CD4-positive, alpha-beta memory T cell (primary cell): ENCODE measurements at regions of chr12 and their contacts with region 1.

Region 1: DNA sequence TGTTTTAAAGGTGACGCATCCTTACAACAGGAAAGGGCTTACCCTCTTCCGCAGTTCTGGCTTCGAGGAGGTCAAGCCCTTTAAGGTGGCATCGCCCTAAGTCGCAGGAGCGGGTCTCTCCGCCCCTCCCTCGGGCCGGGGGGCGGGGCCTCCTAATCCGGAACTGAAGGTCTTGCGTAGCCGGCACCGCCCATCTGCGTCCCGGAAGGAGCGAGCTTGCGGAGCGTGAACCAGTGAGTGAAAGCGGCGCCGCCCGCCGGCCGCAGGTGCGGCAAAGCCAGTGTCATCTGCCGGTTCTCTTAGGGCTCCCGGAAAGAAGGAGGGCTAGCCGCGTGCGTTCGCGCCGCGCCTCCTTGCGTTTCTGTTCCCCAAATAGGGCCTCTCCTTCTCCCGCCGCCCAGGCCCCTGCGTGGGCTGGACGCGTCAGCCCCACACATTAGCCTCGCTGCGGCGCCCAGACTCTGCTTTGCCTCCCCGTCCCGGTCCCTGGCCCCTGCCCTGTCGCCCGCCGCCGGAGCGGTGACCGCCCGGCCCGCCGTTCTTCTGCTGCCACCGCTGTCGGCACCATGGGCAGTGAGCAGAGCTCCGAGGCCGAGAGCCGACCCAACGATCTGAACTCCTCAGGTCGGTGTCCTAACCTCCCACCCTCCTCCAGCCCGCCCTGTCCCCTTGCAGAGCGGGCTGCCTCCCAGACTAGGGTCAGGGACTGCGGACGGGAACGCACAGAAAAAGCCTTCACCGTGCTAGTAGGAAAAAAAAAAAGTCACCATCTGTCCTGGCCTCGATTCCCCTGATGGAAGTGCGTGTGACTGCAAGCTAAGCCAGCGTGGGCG is at the start of gene BORCS5:
- DNase-seq: peak; percentile 98 to 99 (median 99)
- H3K4me3 ChIP-seq: peak within 1 kb of the TSS; percentile 88 to 90
- H3K4me3 Mint-ChIP-seq: peak within 1 kb of the TSS; percentile 90 to 96 (median 95)
- H3K27ac ChIP-seq: peak within 1 kb of the TSS; percentile 99
- H3K27ac Mint-ChIP-seq: peak within 1 kb of the TSS; percentile 89 to 99 (median 98)
- H3K4me1 ChIP-seq: peaks cover 44% of the 10 kb centered on the region
- H3K4me1 Mint-ChIP-seq: peaks cover 29 to 76% (median 42%) of the 10 kb centered on the region in 4 donors
- H3K27me3 ChIP-seq: no peaks in the 10 kb centered on the region
- H3K27me3 Mint-ChIP-seq: no peaks in the 10 kb centered on the region
- total RNA-seq, gene BORCS5: 21.3 to 26.8 TPM

Region 2: GRCh38 chr12:11648831-11649702 is 708.0 kb before region 1 on chr12 and contains the start of gene ETV6:
- CTCF ChIA-PET with region 1: no interaction called
- POLR2A ChIA-PET with region 1: interaction called, 13 read pairs
- intact Hi-C with region 1: loop called (anchors 5 kb)
- DNase-seq: peak; percentile 79 to 84 (median 81)
- H3K4me3 ChIP-seq: peak within 1 kb of the TSS; percentile 59 to 97
- H3K4me3 Mint-ChIP-seq: peak within 1 kb of the TSS; percentile 95 to 99 (median 98)
- H3K27ac ChIP-seq: peak within 1 kb of the TSS; percentile 79
- H3K27ac Mint-ChIP-seq: peak within 1 kb of the TSS; percentile 85 to 99 (median 98)
- H3K4me1 ChIP-seq: peaks cover 32% of the 10 kb centered on the region
- H3K4me1 Mint-ChIP-seq: peaks cover 24 to 48% (median 27%) of the 10 kb centered on the region in 4 donors
- H3K27me3 ChIP-seq: no peaks in the 10 kb centered on the region
- H3K27me3 Mint-ChIP-seq: no peaks in the 10 kb centered on the region
- total RNA-seq, gene ETV6: 41.3 to 43.9 TPM

Region 3: GRCh38 chr12:12099102-12099501 is 258.0 kb before region 1 on chr12:
- CTCF ChIA-PET with region 1: no interaction called
- POLR2A ChIA-PET with region 1: no interaction called
- intact Hi-C with region 1: no loop called
- DNase-seq: no peak
- H3K4me3 ChIP-seq: no peak overlapping the region
- H3K4me3 Mint-ChIP-seq: no peak overlapping the region
- H3K27ac ChIP-seq: no peak overlapping the region
- H3K27ac Mint-ChIP-seq: peak overlapping the region in 1 of 7 donors; percentile 8
- H3K4me1 ChIP-seq: no peaks in the 10 kb centered on the region
- H3K4me1 Mint-ChIP-seq: no peaks in the 10 kb centered on the region
- H3K27me3 ChIP-seq: no peaks in the 10 kb centered on the region
- H3K27me3 Mint-ChIP-seq: no peaks in the 10 kb centered on the region

Region 4: DNA sequence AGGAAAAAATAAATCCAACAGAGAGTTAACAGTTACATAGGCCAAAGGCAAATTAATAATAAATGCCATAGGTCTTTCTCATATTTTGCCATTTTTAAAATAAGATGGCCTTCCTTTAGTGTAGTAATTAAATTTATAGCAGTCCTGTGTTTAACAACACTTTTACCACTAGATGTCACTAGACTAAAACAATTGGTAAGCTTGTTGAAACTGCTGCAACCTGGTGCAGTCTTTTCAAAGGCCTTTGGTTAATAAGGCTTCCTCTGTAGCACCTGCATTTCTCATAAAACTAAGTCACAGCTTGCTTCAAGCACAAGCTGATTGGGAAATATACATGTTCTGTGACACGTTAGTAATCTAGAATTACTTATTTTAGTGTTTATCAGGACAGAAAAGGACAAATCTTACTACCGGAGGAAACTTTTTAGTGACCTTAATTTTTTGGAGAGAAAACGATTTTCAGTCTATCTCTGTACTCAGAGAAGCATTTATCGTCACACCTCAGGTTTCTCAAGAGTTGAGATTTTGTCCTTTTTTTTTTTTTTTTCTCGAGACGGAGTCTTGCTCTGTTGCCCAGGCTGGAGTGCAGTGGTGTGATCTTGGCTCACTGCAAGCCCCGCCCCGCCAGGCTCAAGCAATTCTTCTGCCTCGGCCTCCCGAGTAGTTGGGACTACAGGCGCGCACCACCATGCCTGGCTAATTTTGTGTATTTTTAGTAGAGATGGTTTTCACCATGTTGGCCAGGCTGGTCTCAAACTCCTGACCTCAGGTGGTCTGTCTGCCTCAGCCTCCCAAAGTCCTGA is 19.7 kb after region 1 on chr12:
- CTCF ChIA-PET with region 1: interaction called, 15 read pairs
- POLR2A ChIA-PET with region 1: interaction called, 49 read pairs
- intact Hi-C with region 1: no loop called
- DNase-seq: peak; percentile 62 to 82 (median 81)
- H3K4me3 ChIP-seq: no peak overlapping the region
- H3K4me3 Mint-ChIP-seq: peak overlapping the region in 1 of 8 donors; percentile 41
- H3K27ac ChIP-seq: peak overlapping the region; percentile 23
- H3K27ac Mint-ChIP-seq: peak overlapping the region; percentile 52 to 99 (median 91)
- H3K4me1 ChIP-seq: peaks cover 50% of the 10 kb centered on the region
- H3K4me1 Mint-ChIP-seq: peaks cover 36 to 48% (median 43%) of the 10 kb centered on the region in 4 donors
- H3K27me3 ChIP-seq: no peaks in the 10 kb centered on the region
- H3K27me3 Mint-ChIP-seq: no peaks in the 10 kb centered on the region

Region 5: DNA sequence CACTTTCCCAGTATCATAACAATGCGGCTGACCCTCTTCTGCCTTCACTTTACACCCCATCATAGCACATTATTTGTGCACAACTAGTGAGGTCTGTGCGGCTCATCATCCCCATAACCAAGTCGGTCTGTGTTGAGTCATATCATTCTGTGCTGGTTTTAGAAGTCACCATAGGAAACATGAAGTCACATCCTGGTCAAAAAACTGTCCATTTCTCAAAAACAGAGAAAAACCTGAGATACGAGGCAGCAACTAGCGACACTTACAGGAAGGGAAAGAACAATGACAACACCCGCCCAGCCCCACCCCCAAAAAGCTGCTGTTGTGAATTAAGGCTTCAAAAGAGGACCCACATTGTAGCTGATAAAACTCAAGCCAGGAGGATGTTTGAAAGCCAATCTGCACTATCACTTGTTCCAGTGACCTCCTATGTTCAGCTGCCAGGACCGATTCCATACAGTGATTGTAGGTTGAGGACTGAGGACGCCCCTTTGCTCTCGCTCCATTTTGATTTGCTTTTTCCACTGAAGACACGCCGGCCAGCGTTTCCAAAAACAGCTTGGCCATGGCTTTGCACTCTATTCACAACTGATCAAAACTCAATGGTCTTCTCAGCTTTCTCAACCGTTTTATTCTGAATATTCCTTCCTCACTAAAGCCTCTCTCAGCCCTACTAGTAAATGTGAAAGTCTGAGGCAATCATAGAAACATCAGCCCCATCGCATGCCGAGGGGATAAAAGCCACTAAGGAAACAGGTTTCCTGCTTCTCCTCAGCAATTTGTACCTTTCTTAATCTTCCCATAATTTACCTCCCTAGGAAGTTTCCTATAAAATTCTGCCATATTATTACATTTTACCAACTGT is 118.1 kb after region 1 on chr12:
- CTCF ChIA-PET with region 1: interaction called, 4 read pairs
- POLR2A ChIA-PET with region 1: interaction called, 44 read pairs
- intact Hi-C with region 1: no loop called
- DNase-seq: peak; percentile 76 to 82 (median 80)
- H3K4me3 ChIP-seq: peak overlapping the region; percentile 25 to 51
- H3K4me3 Mint-ChIP-seq: peak overlapping the region; percentile 67 to 89 (median 82)
- H3K27ac ChIP-seq: peak overlapping the region; percentile 81
- H3K27ac Mint-ChIP-seq: peak overlapping the region; percentile 91 to 99 (median 98)
- H3K4me1 ChIP-seq: peaks cover 64% of the 10 kb centered on the region
- H3K4me1 Mint-ChIP-seq: peaks cover 44 to 87% (median 65%) of the 10 kb centered on the region in 4 donors
- H3K27me3 ChIP-seq: no peaks in the 10 kb centered on the region
- H3K27me3 Mint-ChIP-seq: no peaks in the 10 kb centered on the region

Region 6: GRCh38 chr12:12582895-12583303 is 225.8 kb after region 1 on chr12:
- CTCF ChIA-PET with region 1: no interaction called
- POLR2A ChIA-PET with region 1: no interaction called
- intact Hi-C with region 1: no loop called
- DNase-seq: no peak
- H3K4me3 ChIP-seq: no peak overlapping the region
- H3K4me3 Mint-ChIP-seq: peak overlapping the region in 2 of 8 donors; percentile 31 to 57
- H3K27ac ChIP-seq: no peak overlapping the region
- H3K27ac Mint-ChIP-seq: peak overlapping the region in 2 of 7 donors; percentile 27 to 66
- H3K4me1 ChIP-seq: peaks cover 14% of the 10 kb centered on the region
- H3K4me1 Mint-ChIP-seq: peaks cover 13 to 19% (median 14%) of the 10 kb centered on the region in 4 donors
- H3K27me3 ChIP-seq: no peaks in the 10 kb centered on the region
- H3K27me3 Mint-ChIP-seq: no peaks in the 10 kb centered on the region

Region 7: DNA sequence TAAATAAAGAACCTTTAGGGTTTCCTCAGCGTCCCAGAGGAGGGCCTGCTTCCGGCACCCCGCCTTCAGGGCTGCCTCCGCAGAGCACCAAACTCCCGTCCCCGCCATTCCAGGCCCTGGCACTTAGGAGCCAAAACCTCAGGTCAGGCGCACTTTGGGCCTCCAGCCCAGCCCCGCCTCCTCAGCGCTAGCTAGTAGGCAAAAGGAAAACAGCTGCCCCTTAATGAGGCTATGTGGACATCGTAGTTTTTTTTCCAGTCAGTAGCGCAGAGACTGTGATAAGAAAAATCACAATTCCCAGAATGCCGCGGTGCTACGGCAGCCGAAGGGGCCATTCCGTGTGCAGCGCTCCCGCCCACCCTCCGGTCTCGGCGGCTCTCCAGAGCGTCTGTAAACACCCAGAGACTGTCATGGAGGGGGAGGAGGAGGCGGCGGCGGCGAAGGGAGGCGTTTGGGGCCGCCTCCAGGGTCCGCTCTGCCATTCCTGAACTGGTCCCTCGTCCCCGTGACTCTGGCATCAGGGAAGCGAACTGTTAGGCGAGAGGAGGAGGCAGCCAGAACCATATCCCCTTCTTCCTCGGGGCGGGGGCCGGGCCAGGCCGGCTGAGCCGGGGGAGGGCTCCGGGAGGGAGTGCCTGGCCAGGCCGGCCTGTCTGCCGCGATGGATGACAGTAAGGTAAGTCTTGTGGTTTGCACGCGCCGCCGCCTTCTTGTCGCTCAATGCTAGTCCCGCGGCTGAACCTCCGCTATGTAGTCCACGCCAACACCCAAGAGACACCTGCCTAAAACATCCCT is 254.6 kb after region 1 on chr12 and contains the start of gene CREBL2:
- CTCF ChIA-PET with region 1: no interaction called
- POLR2A ChIA-PET with region 1: interaction called, 15 read pairs
- intact Hi-C with region 1: loop called (anchors 1 kb)
- DNase-seq: peak; percentile 88 to 89 (median 88)
- H3K4me3 ChIP-seq: peak within 1 kb of the TSS; percentile 92 to 97
- H3K4me3 Mint-ChIP-seq: peak within 1 kb of the TSS; percentile 92 to 99 (median 95)
- H3K27ac ChIP-seq: peak within 1 kb of the TSS; percentile 77
- H3K27ac Mint-ChIP-seq: peak within 1 kb of the TSS; percentile 93 to 99 (median 99)
- H3K4me1 ChIP-seq: peaks cover 66% of the 10 kb centered on the region
- H3K4me1 Mint-ChIP-seq: peaks cover 34 to 73% (median 54%) of the 10 kb centered on the region in 4 donors
- H3K27me3 ChIP-seq: no peaks in the 10 kb centered on the region
- H3K27me3 Mint-ChIP-seq: no peaks in the 10 kb centered on the region
- total RNA-seq, gene CREBL2: 51.0 to 52.0 TPM

Region 8: GRCh38 chr12:12716793-12717585 is 359.9 kb after region 1 on chr12 and contains the start of gene CDKN1B:
- CTCF ChIA-PET with region 1: interaction called, 14 read pairs
- POLR2A ChIA-PET with region 1: interaction called, 473 read pairs
- intact Hi-C with region 1: loop called (anchors 2 kb)
- DNase-seq: peak; percentile 87 to 90 (median 89)
- H3K4me3 ChIP-seq: peak within 1 kb of the TSS; percentile 94 to 99
- H3K4me3 Mint-ChIP-seq: peak within 1 kb of the TSS; percentile 96 to 100 (median 98)
- H3K27ac ChIP-seq: peak within 1 kb of the TSS; percentile 95
- H3K27ac Mint-ChIP-seq: peak within 1 kb of the TSS; percentile 96 to 99 (median 98)
- H3K4me1 ChIP-seq: peaks cover 51% of the 10 kb centered on the region
- H3K4me1 Mint-ChIP-seq: peaks cover 38 to 63% (median 47%) of the 10 kb centered on the region in 4 donors
- H3K27me3 ChIP-seq: no peaks in the 10 kb centered on the region
- H3K27me3 Mint-ChIP-seq: no peaks in the 10 kb centered on the region
- total RNA-seq, gene CDKN1B: 232 to 238 TPM

Region 9: DNA sequence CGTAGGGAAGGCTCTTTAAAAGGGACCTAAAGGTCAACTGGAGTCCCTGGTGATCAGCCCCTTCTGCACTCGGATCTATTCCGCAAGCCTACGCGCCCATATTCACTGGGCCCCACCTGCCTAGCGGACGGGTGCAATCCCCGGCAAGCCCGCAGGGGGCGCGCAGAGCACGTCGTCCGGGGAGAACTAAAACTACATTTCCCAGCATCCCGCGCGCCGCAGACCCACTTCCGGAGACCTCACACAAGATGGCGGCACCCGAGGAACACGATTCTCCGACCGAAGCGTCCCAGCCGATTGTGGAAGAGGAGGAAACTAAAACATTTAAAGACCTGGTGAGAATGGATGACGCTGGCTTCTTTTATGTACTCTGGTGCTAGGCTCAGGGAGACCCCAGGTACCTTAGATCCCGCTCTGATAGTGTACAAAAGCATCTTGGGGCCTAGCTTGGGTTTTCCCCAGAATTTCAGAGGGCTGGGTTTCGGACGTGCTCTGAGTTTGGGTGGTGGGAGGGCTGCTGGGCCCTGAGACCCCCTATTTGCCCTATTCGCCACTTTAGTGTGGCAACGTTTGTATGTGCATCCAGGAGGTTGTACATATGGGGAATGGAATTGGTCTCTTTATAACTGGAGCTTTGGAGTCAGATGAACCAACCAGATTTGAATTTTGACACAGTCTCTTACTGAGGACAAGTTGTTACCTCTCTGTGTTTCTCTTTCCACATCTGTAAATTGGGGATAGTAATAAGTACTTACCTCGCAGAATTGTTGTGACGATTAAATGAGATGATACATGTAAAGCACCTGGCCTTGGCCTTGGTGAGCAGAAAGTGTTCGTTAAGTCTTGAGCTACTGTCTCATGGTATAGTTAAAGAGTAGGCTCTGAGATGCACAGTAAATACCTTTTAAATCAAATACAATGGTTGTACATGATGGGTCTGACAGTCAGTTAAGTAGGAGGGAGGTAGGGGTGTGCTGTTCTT is 456.3 kb after region 1 on chr12 and contains the start of gene DDX47:
- CTCF ChIA-PET with region 1: no interaction called
- POLR2A ChIA-PET with region 1: interaction called, 11 read pairs
- intact Hi-C with region 1: loop called (anchors 10 kb)
- DNase-seq: peak; percentile 93 to 97 (median 95)
- H3K4me3 ChIP-seq: peak within 1 kb of the TSS; percentile 87 to 92
- H3K4me3 Mint-ChIP-seq: peak within 1 kb of the TSS; percentile 89 to 98 (median 98)
- H3K27ac ChIP-seq: peak within 1 kb of the TSS; percentile 95
- H3K27ac Mint-ChIP-seq: peak within 1 kb of the TSS; percentile 88 to 99 (median 98)
- H3K4me1 ChIP-seq: peaks cover 53% of the 10 kb centered on the region
- H3K4me1 Mint-ChIP-seq: peaks cover 41 to 76% (median 58%) of the 10 kb centered on the region in 4 donors
- H3K27me3 ChIP-seq: no peaks in the 10 kb centered on the region
- H3K27me3 Mint-ChIP-seq: no peaks in the 10 kb centered on the region
- total RNA-seq, gene DDX47: 66.5 to 66.6 TPM